Caco-2 (cell line): ENCODE measurements at regions of chr6 and their contacts with region 1.

Region 1: GRCh38 chr6:786946-787763 is 94.2 kb upstream of the EXOC2 start:
- DNase-seq: peak in 1 of 2 experiments; percentile 24
- H3K4me3 ChIP-seq: no peak overlapping the region
- H3K4me3 Mint-ChIP-seq: no peak overlapping the region
- H3K27ac Mint-ChIP-seq: no peak overlapping the region
- H3K4me1 ChIP-seq: no peaks in the 10 kb centered on the region
- H3K4me1 Mint-ChIP-seq: no peaks in the 10 kb centered on the region
- H3K27me3 ChIP-seq: no peaks in the 10 kb centered on the region
- H3K27me3 Mint-ChIP-seq: peaks cover 6% of the 10 kb centered on the region
- CTCF ChIP-seq: peak; percentile 31 to 47

Region 2: GRCh38 chr6:593139-593906 is 193.8 kb before region 1 on chr6:
- CTCF ChIA-PET with region 1: interaction called, 4 read pairs
- POLR2A ChIA-PET with region 1: no interaction called
- intact Hi-C with region 1: loop called (anchors 2 kb)
- DNase-seq: peak; percentile 41 to 55
- H3K4me3 ChIP-seq: no peak overlapping the region
- H3K4me3 Mint-ChIP-seq: no peak overlapping the region
- H3K27ac Mint-ChIP-seq: no peak overlapping the region
- H3K4me1 ChIP-seq: no peaks in the 10 kb centered on the region
- H3K4me1 Mint-ChIP-seq: no peaks in the 10 kb centered on the region
- H3K27me3 ChIP-seq: no peaks in the 10 kb centered on the region
- H3K27me3 Mint-ChIP-seq: no peaks in the 10 kb centered on the region
- CTCF ChIP-seq: peak; percentile 47 to 52

Region 3: GRCh38 chr6:939526-940252 is 152.5 kb after region 1 on chr6:
- CTCF ChIA-PET with region 1: no interaction called
- POLR2A ChIA-PET with region 1: no interaction called
- intact Hi-C with region 1: no loop called
- DNase-seq: no peak
- H3K4me3 ChIP-seq: no peak overlapping the region
- H3K4me3 Mint-ChIP-seq: no peak overlapping the region
- H3K27ac Mint-ChIP-seq: no peak overlapping the region
- H3K4me1 ChIP-seq: no peaks in the 10 kb centered on the region; the same call in 1 of the 2 replicates
- H3K4me1 Mint-ChIP-seq: no peaks in the 10 kb centered on the region
- H3K27me3 ChIP-seq: no peaks in the 10 kb centered on the region
- H3K27me3 Mint-ChIP-seq: no peaks in the 10 kb centered on the region
- CTCF ChIP-seq: no peak